Calu3 (cell line): ENCODE measurements at regions of chr1 and their contacts with region 1.

Region 1: GRCh38 chr1:87888446-87888845 is 559.8 kb downstream of the LMO4 start:
- DNase-seq: no peak
- H3K4me3 Mint-ChIP-seq: no peak overlapping the region
- H3K27ac Mint-ChIP-seq: peak overlapping the region; percentile 95
- H3K4me1 Mint-ChIP-seq: peaks cover 37% of the 10 kb centered on the region
- H3K27me3 Mint-ChIP-seq: no peaks in the 10 kb centered on the region
- CTCF ChIP-seq: no peak

Region 2: GRCh38 chr1:87805666-87806378 is 82.6 kb before region 1 on chr1:
- CTCF ChIA-PET with region 1: no interaction called
- intact Hi-C with region 1: loop called (anchors 2 kb)
- DNase-seq: peak; percentile 66
- H3K4me3 Mint-ChIP-seq: peak overlapping the region; percentile 62
- H3K27ac Mint-ChIP-seq: peak overlapping the region; percentile 92
- H3K4me1 Mint-ChIP-seq: peaks cover 61% of the 10 kb centered on the region
- H3K27me3 Mint-ChIP-seq: no peaks in the 10 kb centered on the region
- CTCF ChIP-seq: no peak

Region 3: GRCh38 chr1:87816646-87817045 is 71.8 kb before region 1 on chr1:
- CTCF ChIA-PET with region 1: no interaction called
- intact Hi-C with region 1: no loop called
- DNase-seq: no peak
- H3K4me3 Mint-ChIP-seq: no peak overlapping the region
- H3K27ac Mint-ChIP-seq: no peak overlapping the region
- H3K4me1 Mint-ChIP-seq: no peaks in the 10 kb centered on the region
- H3K27me3 Mint-ChIP-seq: no peaks in the 10 kb centered on the region
- CTCF ChIP-seq: no peak

Region 4: GRCh38 chr1:87826681-87827251 is 61.7 kb before region 1 on chr1:
- CTCF ChIA-PET with region 1: no interaction called
- intact Hi-C with region 1: no loop called
- DNase-seq: no peak
- H3K4me3 Mint-ChIP-seq: no peak overlapping the region
- H3K27ac Mint-ChIP-seq: no peak overlapping the region
- H3K4me1 Mint-ChIP-seq: peaks cover 7% of the 10 kb centered on the region
- H3K27me3 Mint-ChIP-seq: no peaks in the 10 kb centered on the region
- CTCF ChIP-seq: no peak

Region 5: GRCh38 chr1:87942165-87942564 is 53.7 kb after region 1 on chr1:
- CTCF ChIA-PET with region 1: no interaction called
- intact Hi-C with region 1: no loop called
- DNase-seq: no peak
- H3K4me3 Mint-ChIP-seq: no peak overlapping the region
- H3K27ac Mint-ChIP-seq: no peak overlapping the region
- H3K4me1 Mint-ChIP-seq: peaks cover 20% of the 10 kb centered on the region
- H3K27me3 Mint-ChIP-seq: no peaks in the 10 kb centered on the region
- CTCF ChIP-seq: no peak

Region 6: GRCh38 chr1:87953732-87954344 is 65.4 kb after region 1 on chr1:
- CTCF ChIA-PET with region 1: no interaction called
- intact Hi-C with region 1: loop called (anchors 5 kb)
- DNase-seq: peak; percentile 75
- H3K4me3 Mint-ChIP-seq: no peak overlapping the region
- H3K27ac Mint-ChIP-seq: peak overlapping the region; percentile 50
- H3K4me1 Mint-ChIP-seq: peaks cover 33% of the 10 kb centered on the region
- H3K27me3 Mint-ChIP-seq: no peaks in the 10 kb centered on the region
- CTCF ChIP-seq: peak; percentile 66

Region 7: GRCh38 chr1:88175120-88175630 is 286.7 kb after region 1 on chr1:
- CTCF ChIA-PET with region 1: no interaction called
- intact Hi-C with region 1: no loop called
- DNase-seq: no peak
- H3K4me3 Mint-ChIP-seq: peak overlapping the region; percentile 51
- H3K27ac Mint-ChIP-seq: peak overlapping the region; percentile 85
- H3K4me1 Mint-ChIP-seq: peaks cover 60% of the 10 kb centered on the region
- H3K27me3 Mint-ChIP-seq: no peaks in the 10 kb centered on the region
- CTCF ChIP-seq: no peak